HepG2 (cell line): ENCODE measurements at regions of chr11 and their contacts with region 1.

Region 1: DNA sequence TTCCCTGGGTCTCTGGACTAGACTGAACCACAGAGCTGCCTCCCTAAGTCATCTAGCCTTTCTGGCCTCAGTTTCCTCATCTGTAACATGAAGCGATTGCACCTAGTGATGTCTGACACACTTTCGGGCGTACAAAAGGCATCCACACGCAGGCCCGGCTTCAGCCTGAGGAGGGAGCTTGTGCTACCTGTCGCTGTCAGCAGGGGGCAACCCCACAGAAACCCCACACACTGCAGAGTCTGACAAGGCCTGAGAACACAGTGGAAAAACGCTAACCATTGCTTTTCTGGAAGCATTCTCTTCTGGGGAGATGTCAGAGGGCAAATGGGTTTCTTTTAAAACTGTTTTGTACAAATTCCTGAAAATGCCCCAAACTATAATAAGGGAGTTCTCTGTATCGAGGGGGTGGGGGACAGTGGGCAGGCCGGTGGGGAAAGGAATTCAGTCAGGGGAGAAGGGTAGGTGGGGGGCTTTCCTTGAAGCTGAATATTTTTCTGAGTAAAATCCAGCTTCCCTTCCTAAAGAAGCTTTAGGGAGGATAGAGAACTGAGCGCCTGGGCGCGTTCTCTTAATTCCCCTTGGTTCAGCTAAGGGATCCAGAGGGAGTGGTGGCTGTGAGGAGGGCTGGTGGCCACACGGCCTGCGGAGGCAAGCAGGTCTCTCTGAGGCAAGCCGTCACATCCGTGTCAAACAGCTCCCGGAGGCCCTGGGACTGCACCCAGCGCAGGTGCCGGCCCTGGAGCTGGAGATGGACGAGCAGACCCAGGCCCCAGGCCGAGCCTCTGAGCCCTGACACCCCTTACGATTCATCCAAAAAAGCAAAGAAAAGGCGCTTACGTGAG is 533 bp downstream of the ELF5 start:
- DNase-seq: peak; percentile 69
- ATAC-seq: peak; percentile 96
- H3K4me3 ChIP-seq: peak overlapping the region; percentile 22 to 58 (median 32); a peak in 5 of 6 replicates
- H3K27ac ChIP-seq: no peak overlapping the region
- H3K4me1 ChIP-seq: peaks cover 49% of the 10 kb centered on the region
- H3K27me3 ChIP-seq: no peaks in the 10 kb centered on the region; a peak in 1 of 5 replicates
- CTCF ChIP-seq: peak; percentile 93
- EP300 ChIP-seq: peak in 1 of 2 experiments; percentile 33; a peak in 1 of 4 replicates
- POLR2A ChIP-seq: no peak
- RAD21 ChIP-seq: peak; percentile 74

Region 2: GRCh38 chr11:34546511-34547222 is 33.6 kb after region 1 on chr11:
- CTCF ChIA-PET with region 1: no interaction called
- POLR2A ChIA-PET with region 1: no interaction called
- in situ Hi-C with region 1: no loop called
- intact Hi-C with region 1: loop called (anchors 5 kb)
- DNase-seq: peak; percentile 57
- ATAC-seq: peak; percentile 84
- H3K4me3 ChIP-seq: peak overlapping the region in 1 of 3 experiments; percentile 12; a peak in 1 of 6 replicates
- H3K27ac ChIP-seq: no peak overlapping the region
- H3K4me1 ChIP-seq: peaks cover 28% of the 10 kb centered on the region
- H3K27me3 ChIP-seq: peaks cover 0 to 21% of the 10 kb centered on the region in 2 experiments; a peak in 2 of 5 replicates
- CTCF ChIP-seq: no peak
- EP300 ChIP-seq: no peak
- POLR2A ChIP-seq: no peak
- RAD21 ChIP-seq: no peak

Region 3: GRCh38 chr11:34899633-34900016 is 386.6 kb after region 1 on chr11:
- CTCF ChIA-PET with region 1: interaction called, 19 read pairs
- POLR2A ChIA-PET with region 1: no interaction called
- in situ Hi-C with region 1: loop called (anchors 5 kb)
- intact Hi-C with region 1: loop called (anchors 2 kb)
- DNase-seq: no peak
- ATAC-seq: no peak
- H3K4me3 ChIP-seq: no peak overlapping the region
- H3K27ac ChIP-seq: no peak overlapping the region
- H3K4me1 ChIP-seq: peaks cover 9% of the 10 kb centered on the region
- H3K27me3 ChIP-seq: no peaks in the 10 kb centered on the region
- CTCF ChIP-seq: no peak
- EP300 ChIP-seq: no peak
- POLR2A ChIP-seq: no peak
- RAD21 ChIP-seq: no peak